Aorta (tissue), 5 donors: ENCODE measurements at regions of chr15 and their contacts with region 1.

Region 1: DNA sequence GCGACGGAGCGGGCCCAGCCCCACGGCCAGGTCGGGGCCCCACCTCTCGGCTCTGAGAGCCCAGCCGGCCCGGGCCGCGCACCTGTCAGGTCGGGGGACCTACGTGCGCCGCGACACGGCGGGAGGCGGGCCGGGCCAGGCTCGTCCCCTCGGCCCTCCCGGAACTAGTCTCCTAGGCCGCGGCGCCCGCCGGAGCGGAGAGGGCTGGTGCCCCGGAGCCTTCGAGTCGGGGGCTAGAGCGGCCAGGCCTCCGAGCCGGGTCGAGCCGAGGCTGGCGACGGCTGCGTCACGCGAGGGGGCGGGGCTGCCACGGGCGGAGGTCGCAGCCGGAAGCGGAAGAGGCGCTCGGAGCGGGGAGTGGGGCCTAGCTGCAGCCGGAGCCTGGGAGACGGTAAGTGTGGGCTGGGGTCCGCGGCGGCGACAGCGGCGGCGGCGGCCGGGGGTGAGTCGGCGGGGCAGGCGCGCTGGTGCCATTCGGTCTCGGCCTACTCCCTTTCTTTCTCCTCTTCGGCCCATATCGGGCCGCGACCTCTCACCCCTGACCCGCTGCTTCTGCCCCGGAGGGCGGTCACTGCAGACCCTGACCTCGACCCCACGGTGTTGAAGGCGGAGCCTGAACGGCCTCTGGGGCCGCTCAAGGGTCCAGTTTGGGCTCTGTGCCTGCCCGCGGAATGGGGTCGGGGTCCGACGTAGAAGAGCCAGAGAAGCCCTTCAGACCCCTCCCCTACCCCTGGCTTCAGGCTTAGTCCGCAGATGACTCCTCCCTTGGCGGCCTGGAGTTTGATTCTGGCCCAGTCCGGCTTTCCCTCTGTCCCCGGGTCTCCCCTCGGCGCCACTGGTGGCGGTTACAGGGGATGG is at the start of gene CLK3:
- DNase-seq: peak; percentile 98 to 99
- ATAC-seq: peak; percentile 93
- H3K4me3 ChIP-seq: peak within 1 kb of the TSS; percentile 66 to 70
- H3K27ac ChIP-seq: peak within 1 kb of the TSS; percentile 68 to 81
- H3K4me1 ChIP-seq: no peaks in the 10 kb centered on the region
- H3K27me3 ChIP-seq: no peaks in the 10 kb centered on the region
- total RNA-seq, gene CLK3: 63.7 to 73.2 TPM

Region 2: GRCh38 chr15:74540761-74541493 is 74.8 kb before region 1 on chr15 and contains the start of gene ARID3B:
- intact Hi-C with region 1: loop called (anchors 2 to 5 kb)
- DNase-seq: peak; percentile 98 to 99
- ATAC-seq: peak; percentile 97
- H3K4me3 ChIP-seq: peak within 1 kb of the TSS; percentile 88 to 90
- H3K27ac ChIP-seq: peak within 1 kb of the TSS in 1 of 2 donors; percentile 19
- H3K4me1 ChIP-seq: no peaks in the 10 kb centered on the region
- H3K27me3 ChIP-seq: no peaks in the 10 kb centered on the region
- total RNA-seq, gene ARID3B: 10.9 to 11.7 TPM

Region 3: GRCh38 chr15:74565381-74566085 is 50.2 kb before region 1 on chr15:
- intact Hi-C with region 1: no loop called
- DNase-seq: no peak
- ATAC-seq: no peak
- H3K4me3 ChIP-seq: no peak overlapping the region
- H3K27ac ChIP-seq: no peak overlapping the region
- H3K4me1 ChIP-seq: peaks cover under 1 to 8% of the 10 kb centered on the region in 2 donors
- H3K27me3 ChIP-seq: no peaks in the 10 kb centered on the region

Region 4: DNA sequence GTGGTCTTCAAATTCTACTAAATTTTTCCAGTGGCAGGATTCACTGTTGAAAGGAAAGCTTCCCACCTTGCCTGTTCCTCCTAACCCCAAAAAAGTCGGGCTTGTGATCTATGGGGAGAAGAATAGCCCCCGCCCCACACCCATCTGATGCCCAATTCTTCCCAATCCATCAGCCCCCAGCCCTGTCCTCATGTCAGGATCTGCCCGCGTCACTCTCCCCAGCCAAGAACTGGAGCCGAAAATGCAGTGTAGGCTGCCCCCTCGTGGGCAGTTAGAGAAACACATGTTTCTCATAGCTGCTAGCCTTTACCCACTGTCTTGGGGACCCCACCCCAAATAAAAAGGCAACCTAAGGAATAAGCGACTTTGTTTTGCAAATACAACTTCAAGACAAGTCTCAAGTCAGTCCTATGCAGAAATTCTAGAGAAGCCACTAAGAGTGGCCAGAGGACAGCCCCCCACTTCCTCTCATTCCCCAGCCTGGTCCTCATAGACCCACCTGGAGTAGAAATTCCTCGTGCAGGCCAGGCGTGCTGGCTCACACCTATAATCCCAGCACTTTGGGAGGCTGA is 153.1 kb after region 1 on chr15:
- intact Hi-C with region 1: no loop called
- DNase-seq: peak; percentile 69 to 87
- ATAC-seq: peak; percentile 78
- H3K4me3 ChIP-seq: no peak overlapping the region
- H3K27ac ChIP-seq: no peak overlapping the region
- H3K4me1 ChIP-seq: no peaks in the 10 kb centered on the region
- H3K27me3 ChIP-seq: no peaks in the 10 kb centered on the region